Vagina (tissue), 2 donors: ENCODE measurements at regions of chr4 and their contacts with region 1.

Region 1: GRCh38 chr4:39977489-39978377 is at the start of gene PDS5A:
- DNase-seq: peak in 1 of 2 donors; percentile 89
- H3K4me3 ChIP-seq: peak within 1 kb of the TSS; percentile 80 to 98
- H3K27ac ChIP-seq: peak within 1 kb of the TSS; percentile 98
- H3K4me1 ChIP-seq: peaks cover 39% of the 10 kb centered on the region
- H3K27me3 ChIP-seq: no peaks in the 10 kb centered on the region
- CTCF ChIP-seq: peak; percentile 68 to 83 (median 72)
- POLR2A ChIP-seq: peak in 1 of 2 donors; percentile 32
- total RNA-seq, gene PDS5A: 64.6 TPM

Region 2: DNA sequence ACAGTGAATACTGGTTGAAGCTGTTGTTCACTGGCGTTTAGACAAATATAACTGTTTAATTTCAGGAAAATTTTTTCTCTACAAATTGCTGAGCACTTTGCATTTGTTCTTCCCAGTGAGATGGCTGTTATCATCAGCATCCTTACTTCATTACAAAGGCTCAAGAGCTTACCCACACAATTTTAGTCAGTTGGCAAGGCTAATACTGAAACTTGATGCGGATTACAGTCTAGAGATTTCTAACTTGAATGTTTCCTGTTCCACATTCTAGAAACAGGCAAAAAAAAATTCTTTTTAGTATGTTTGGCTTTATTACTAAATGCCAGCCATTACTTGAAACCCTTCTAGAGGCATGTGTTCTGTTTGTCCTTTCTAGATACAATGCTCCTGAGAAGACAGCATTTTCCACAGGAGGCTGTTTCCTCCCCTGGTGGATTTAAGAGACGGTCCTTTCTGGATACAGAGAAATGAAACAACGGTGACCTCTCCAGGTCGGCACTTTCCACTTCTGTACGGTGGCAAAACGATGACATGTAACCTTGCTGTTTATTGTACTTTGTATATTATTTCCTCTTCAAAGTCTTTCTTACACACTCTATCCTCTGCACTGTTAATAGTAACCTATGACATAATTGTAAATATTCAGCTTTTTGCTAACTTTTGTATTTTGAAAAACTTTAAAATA is 692.5 kb before region 1 on chr4:
- intact Hi-C with region 1: no loop called
- DNase-seq: no peak
- H3K4me3 ChIP-seq: no peak overlapping the region
- H3K27ac ChIP-seq: no peak overlapping the region
- H3K4me1 ChIP-seq: no peaks in the 10 kb centered on the region
- H3K27me3 ChIP-seq: no peaks in the 10 kb centered on the region
- CTCF ChIP-seq: no peak
- POLR2A ChIP-seq: no peak

Region 3: DNA sequence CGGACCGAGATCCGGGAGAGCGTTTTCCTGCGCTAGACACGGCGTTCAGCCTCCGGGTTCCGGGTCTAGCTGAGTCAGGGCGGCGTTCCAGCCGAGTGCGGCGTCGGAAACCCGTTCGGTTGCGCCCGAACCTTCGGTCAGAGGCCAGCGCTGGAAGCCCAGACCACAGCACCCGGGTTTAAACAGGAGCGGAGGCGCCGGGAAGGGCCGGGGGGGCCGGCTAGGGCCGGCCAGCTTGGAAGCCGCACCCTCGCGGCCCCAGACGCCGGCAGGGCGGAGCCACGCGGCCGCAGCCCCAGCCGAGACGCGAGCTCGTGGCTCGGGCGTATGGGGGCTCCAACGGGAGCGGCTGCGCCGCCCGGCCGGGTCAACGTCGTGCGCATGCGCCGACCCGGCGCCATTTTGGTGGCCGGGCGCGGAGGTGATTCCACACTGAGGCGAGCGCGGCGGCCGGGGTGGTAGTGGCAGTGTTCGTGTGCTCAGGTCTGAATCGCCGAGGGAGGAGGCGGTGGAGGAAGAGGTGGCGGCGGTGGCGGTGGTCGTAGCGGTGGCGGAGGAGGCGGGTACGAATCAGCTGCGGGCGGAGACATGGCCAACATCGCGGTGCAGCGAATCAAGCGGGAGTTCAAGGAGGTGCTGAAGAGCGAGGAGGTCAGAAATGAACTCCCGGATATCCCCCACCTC is 279.9 kb before region 1 on chr4 and contains the start of gene UBE2K:
- intact Hi-C with region 1: loop called (anchors 5 kb)
- DNase-seq: peak in 1 of 2 donors; percentile 90
- H3K4me3 ChIP-seq: peak within 1 kb of the TSS; percentile 71 to 85
- H3K27ac ChIP-seq: peak within 1 kb of the TSS; percentile 98
- H3K4me1 ChIP-seq: peaks cover 51% of the 10 kb centered on the region
- H3K27me3 ChIP-seq: no peaks in the 10 kb centered on the region
- CTCF ChIP-seq: peak in 1 of 3 experiments; percentile 27
- POLR2A ChIP-seq: peak in 1 of 2 donors; percentile 85
- total RNA-seq, gene UBE2K: 21.4 TPM